ENCODE measurements at regions of chr10 and their contacts with region 1.

Region 1: GRCh38 chr10:119737827-119738226 is 12.0 kb downstream of the INPP5F start:
- DNase-seq: no peak

Region 2: GRCh38 chr10:119542988-119543813 is 194.6 kb before region 1 on chr10:
- CTCF ChIA-PET with region 1: no interaction called
- POLR2A ChIA-PET with region 1: no interaction called
- DNase-seq: peak; percentile 62

Region 3: GRCh38 chr10:119693262-119693957 is 44.4 kb before region 1 on chr10:
- CTCF ChIA-PET with region 1: no interaction called
- POLR2A ChIA-PET with region 1: no interaction called
- DNase-seq: no peak

Region 4: DNA sequence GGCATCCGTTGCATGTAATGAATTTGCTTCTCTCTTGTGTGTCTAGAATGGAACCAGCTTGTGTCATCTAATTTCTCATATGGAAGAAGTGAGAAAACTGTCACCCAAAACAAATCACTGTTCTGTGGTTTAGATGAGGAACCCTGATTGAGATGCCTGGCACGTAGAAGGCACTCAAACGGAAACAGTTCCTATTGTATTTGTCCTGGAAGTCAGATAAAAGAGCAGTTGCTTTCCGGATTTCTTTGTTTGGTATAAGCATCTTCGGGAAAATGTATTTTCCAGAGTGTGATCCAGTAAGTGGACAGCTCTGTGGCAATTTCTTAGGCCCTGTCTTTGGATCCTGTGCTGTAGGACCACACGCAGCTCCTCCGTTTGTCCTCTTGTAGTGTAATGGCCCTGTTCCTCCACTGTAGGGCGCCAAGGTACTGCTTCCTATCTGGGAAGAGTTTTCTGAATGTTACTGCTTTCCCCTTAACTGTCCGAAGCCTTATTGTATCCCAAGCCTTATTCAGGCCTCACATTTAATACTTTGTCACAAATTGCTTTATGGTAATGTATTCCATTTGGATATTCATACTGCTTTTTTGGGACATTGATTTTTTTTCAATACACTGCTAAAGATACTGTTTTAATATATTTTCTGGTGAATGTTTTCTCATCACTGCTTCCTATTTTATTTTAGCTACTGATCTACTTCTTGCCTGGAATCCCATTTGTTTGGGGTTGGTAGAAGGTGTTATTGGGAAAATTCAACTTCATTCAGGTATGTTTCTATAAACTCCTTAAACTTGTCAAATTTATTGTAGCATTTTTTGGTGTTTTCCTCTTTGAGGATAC is 12.8 kb after region 1 on chr10:
- CTCF ChIA-PET with region 1: interaction called, 20 read pairs
- POLR2A ChIA-PET with region 1: no interaction called
- DNase-seq: peak; percentile 79

Measured in HEK293T (cell line).